ENCODE measurements at regions of chr10 and their contacts with region 1.

Region 1: DNA sequence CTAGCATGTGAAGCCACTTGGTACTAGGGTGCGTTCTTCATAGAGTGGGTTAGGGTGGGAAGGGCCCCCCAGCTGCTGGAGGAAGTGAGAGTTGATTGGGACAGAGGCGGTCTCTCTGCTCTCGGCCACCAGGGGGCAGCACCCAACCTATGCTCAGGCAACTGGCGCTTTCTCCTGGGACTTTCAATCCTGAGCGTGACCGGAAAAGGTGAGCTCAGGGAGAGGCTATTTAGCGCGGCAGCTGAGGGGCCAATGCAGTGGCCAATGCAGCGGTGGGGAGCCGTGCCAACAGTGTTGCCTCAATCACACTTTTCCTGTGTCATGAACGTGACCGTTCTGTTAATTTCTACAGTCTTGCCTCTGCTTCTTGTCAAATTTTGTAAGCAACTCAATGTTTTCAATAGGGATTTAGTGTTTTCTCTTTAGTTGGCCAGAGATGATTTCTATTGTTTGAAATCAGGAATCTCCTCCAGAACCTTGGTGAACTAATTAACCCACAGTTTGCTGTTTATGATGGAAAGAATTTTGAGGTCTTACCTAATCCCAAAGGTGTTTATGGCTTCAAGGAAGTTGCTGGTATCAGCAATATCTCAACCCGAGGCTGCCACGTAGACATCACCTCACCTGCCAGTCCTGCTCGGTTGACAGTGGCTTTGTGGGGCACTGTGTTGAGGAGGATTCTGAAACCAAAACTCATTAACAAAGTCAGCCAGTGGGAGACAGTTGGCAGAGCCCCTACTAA is 67.9 kb upstream of the PDZD8 start:
- DNase-seq: peak; percentile 49
- H3K4me3 Mint-ChIP-seq: no peak overlapping the region
- H3K27ac Mint-ChIP-seq: no peak overlapping the region
- H3K4me1 Mint-ChIP-seq: peaks cover 3% of the 10 kb centered on the region
- H3K27me3 Mint-ChIP-seq: no peaks in the 10 kb centered on the region

Region 2: DNA sequence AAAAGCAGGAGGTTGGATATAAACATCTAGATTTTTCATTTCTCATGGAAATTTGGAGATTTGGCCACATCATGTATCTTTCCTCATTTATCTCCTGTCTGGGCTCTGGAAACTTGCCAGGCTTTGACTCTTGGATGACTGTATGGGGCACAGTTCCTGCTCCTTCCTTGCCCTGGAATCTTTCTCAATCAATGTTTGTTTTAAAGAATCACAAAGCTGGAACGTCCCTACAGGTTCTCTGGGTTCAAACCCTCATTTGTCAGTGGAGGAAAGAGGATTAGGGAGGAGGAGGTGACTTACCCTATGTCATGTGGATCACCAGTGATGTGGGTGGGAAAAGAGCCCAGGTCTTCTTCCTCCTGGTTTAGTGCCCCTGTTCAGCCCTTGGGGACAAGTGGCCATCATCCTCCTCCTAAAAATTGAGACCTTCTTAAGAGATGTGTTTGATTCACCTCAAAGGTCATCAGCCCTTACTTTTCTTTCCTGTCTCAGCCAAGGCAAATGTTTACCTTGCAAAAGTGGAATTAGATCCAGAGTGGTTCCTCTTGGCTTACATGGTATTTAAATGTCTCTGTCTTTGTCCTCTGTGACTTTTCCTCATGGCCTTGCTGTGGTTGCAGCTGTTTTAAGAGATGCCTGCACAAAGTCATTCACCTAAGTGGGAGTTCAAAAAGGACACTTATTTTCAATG is 29.0 kb before region 1 on chr10:
- CTCF ChIA-PET with region 1: no interaction called
- POLR2A ChIA-PET with region 1: no interaction called
- DNase-seq: no peak
- H3K4me3 Mint-ChIP-seq: no peak overlapping the region
- H3K27ac Mint-ChIP-seq: no peak overlapping the region
- H3K4me1 Mint-ChIP-seq: no peaks in the 10 kb centered on the region
- H3K27me3 Mint-ChIP-seq: peaks cover 15% of the 10 kb centered on the region

Region 3: GRCh38 chr10:117429643-117430265 is 13.4 kb before region 1 on chr10:
- CTCF ChIA-PET with region 1: interaction called, 12 read pairs
- POLR2A ChIA-PET with region 1: no interaction called
- DNase-seq: no peak
- H3K4me3 Mint-ChIP-seq: no peak overlapping the region
- H3K27ac Mint-ChIP-seq: no peak overlapping the region
- H3K4me1 Mint-ChIP-seq: no peaks in the 10 kb centered on the region
- H3K27me3 Mint-ChIP-seq: peaks cover 2% of the 10 kb centered on the region

Measured in activated CD4-positive, alpha-beta memory T cell treated with anti-CD3 and anti-CD28 coated beads, Interleukin-2, amount 10 ng/mL, durations not matched to agents 7 days and 5 days (primary cell).